ENCODE measurements at regions of chr20 and their contacts with region 1.

Region 1: DNA sequence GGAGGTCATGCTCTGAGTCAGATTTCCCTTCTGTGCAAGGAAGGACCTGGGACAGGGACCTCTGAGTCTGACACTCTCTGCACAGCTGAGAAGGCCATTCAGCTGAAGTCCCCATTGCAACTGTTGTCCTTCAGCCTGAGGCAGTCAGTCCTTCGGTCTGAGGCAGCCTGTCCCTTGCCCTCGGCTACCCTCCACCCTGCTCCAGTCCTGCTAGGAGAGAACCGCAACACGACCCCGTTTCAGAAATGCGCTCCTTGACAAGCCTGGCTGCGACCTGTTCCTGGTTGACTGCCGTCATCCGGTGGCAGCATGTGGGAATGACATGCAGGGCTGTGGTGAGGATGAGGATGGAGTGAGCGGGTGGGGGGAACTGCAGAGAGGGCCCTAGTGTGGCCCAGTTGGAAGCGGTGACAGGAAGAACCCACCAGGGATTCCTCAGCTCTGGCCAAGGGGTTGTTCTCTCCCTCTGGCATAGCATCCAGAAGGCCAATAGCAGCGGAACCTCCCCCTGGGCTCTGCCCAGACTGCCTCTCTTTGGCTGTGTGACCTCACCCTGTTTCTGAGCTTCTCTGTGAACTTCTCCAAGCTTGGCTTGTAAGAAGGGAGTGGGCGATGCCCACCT is 40.3 kb upstream of the ANGPT4 start:
- DNase-seq: peak; percentile 33
- H3K4me3 ChIP-seq: no peak overlapping the region
- H3K27ac ChIP-seq: no peak overlapping the region
- H3K4me1 ChIP-seq: no peaks in the 10 kb centered on the region
- H3K27me3 ChIP-seq: peaks cover 8% of the 10 kb centered on the region
- CTCF ChIP-seq: peak; percentile 97 to 99

Region 2: GRCh38 chr20:815914-816606 is 140.4 kb before region 1 on chr20:
- CTCF ChIA-PET with region 1: interaction called, 32 read pairs
- dilution Hi-C with region 1: no loop called
- in situ Hi-C with region 1: loop called (anchors 5 kb)
- intact Hi-C with region 1: loop called (anchors 1 kb)
- DNase-seq: peak; percentile 23
- H3K4me3 ChIP-seq: no peak overlapping the region
- H3K27ac ChIP-seq: no peak overlapping the region
- H3K4me1 ChIP-seq: no peaks in the 10 kb centered on the region
- H3K27me3 ChIP-seq: no peaks in the 10 kb centered on the region
- CTCF ChIP-seq: peak; percentile 94 to 96

Region 3: GRCh38 chr20:856361-857040 is 99.9 kb before region 1 on chr20:
- CTCF ChIA-PET with region 1: interaction called, 3 read pairs
- dilution Hi-C with region 1: no loop called
- in situ Hi-C with region 1: no loop called
- intact Hi-C with region 1: loop called (anchors 1 kb)
- DNase-seq: peak; percentile 100
- H3K4me3 ChIP-seq: peak overlapping the region; percentile 10 to 29 (median 15)
- H3K27ac ChIP-seq: peak overlapping the region; percentile 75
- H3K4me1 ChIP-seq: peaks cover 74% of the 10 kb centered on the region
- H3K27me3 ChIP-seq: no peaks in the 10 kb centered on the region
- CTCF ChIP-seq: no peak

Region 4: DNA sequence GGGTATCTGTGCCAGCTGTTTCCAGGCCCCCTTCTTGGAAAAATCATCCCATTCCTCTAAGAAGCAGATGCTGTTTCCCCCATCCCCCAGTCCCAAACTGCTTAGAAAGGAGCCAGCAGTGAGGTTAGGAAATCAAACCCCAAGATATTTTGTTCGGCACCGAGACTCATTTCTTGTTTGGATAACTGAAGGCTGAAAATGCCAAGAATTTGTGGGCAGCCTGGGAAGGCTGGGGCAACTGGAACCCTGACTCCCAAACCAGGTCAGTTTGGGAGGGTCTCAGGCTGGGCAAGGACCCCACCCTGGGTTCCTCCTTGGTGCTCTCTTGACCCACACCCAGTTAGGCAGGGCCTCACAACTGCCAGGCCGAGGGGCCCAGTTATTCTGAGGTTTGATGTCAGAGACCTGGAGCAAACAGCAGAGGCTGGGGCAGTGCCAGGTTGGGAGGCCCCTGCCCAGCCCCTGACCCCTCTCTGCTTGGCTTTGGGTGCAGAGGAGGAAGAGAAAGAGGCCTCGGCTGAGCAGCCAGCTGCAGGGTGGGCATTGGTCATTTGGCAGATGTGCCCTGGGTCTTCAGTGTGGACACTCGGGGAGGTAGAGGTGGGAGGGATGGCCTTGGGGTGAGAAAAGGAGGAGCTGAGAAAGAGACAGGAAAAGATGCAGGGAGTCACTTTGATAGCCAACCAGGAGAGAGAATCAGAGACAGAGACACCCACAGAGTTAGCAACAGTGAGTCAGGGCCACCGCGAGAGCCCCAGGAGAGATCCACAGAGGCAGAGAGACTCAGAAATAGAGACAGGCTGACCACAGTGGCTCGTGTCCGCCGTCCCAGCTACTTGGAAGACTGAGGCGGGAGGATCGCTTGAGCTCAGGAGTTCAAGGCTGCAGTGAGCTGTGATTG is 45.3 kb before region 1 on chr20:
- CTCF ChIA-PET with region 1: no interaction called
- dilution Hi-C with region 1: no loop called
- in situ Hi-C with region 1: no loop called
- intact Hi-C with region 1: loop called (anchors 5 kb)
- DNase-seq: peak; percentile 4
- H3K4me3 ChIP-seq: no peak overlapping the region
- H3K27ac ChIP-seq: no peak overlapping the region
- H3K4me1 ChIP-seq: no peaks in the 10 kb centered on the region
- H3K27me3 ChIP-seq: no peaks in the 10 kb centered on the region
- CTCF ChIP-seq: no peak

Region 5: DNA sequence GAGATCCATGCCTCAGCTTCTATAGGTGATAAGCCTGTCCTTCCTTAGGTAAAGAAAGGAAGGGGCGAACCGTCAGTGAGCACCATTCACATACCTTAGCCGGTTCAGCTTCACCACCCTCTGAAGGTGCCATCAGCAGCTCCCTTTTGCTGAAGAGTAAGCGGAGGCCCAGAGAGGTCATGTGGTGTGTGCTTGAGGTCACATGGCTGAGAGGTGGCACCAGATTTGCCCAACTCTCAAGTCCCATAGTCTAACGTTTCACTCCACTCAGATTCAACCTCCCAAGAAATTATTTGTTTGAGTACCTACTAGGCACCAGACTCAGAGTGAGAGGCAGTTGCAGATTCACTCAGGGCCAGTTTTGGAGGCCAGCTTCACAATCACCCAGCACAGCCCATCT is 64.2 kb after region 1 on chr20:
- CTCF ChIA-PET with region 1: no interaction called
- dilution Hi-C with region 1: no loop called
- in situ Hi-C with region 1: no loop called
- intact Hi-C with region 1: no loop called
- DNase-seq: no peak
- H3K4me3 ChIP-seq: no peak overlapping the region
- H3K27ac ChIP-seq: no peak overlapping the region
- H3K4me1 ChIP-seq: no peaks in the 10 kb centered on the region
- H3K27me3 ChIP-seq: no peaks in the 10 kb centered on the region
- CTCF ChIP-seq: no peak

Region 6: GRCh38 chr20:1108437-1108920 is 152.0 kb after region 1 on chr20:
- CTCF ChIA-PET with region 1: no interaction called
- dilution Hi-C with region 1: no loop called
- in situ Hi-C with region 1: no loop called
- intact Hi-C with region 1: loop called (anchors 1 kb)
- DNase-seq: peak; percentile 24
- H3K4me3 ChIP-seq: no peak overlapping the region
- H3K27ac ChIP-seq: no peak overlapping the region
- H3K4me1 ChIP-seq: no peaks in the 10 kb centered on the region
- H3K27me3 ChIP-seq: no peaks in the 10 kb centered on the region
- CTCF ChIP-seq: peak; percentile 78 to 84

Region 7: GRCh38 chr20:1118336-1119127 is 162.1 kb after region 1 on chr20 and contains the start of gene PSMF1:
- CTCF ChIA-PET with region 1: interaction called, 13 read pairs
- dilution Hi-C with region 1: no loop called
- in situ Hi-C with region 1: no loop called
- intact Hi-C with region 1: no loop called
- DNase-seq: peak; percentile 89
- H3K4me3 ChIP-seq: peak within 1 kb of the TSS; percentile 73 to 96 (median 90)
- H3K27ac ChIP-seq: peak within 1 kb of the TSS; percentile 64
- H3K4me1 ChIP-seq: peaks cover 46% of the 10 kb centered on the region
- H3K27me3 ChIP-seq: no peaks in the 10 kb centered on the region
- CTCF ChIP-seq: no peak
- total RNA-seq, gene PSMF1: 77.5 to 198 TPM

Region 8: GRCh38 chr20:1212607-1213396 is 256.4 kb after region 1 on chr20:
- CTCF ChIA-PET with region 1: no interaction called
- dilution Hi-C with region 1: no loop called
- in situ Hi-C with region 1: loop called in 1 of 2 experiments (anchors 25 kb)
- intact Hi-C with region 1: loop called (anchors 2 kb)
- DNase-seq: peak; percentile 65
- H3K4me3 ChIP-seq: no peak overlapping the region
- H3K27ac ChIP-seq: no peak overlapping the region
- H3K4me1 ChIP-seq: no peaks in the 10 kb centered on the region
- H3K27me3 ChIP-seq: peaks cover 1% of the 10 kb centered on the region
- CTCF ChIP-seq: peak; percentile 86

Measured in mammary epithelial cell (primary cell).